ENCODE measurements at regions of chr15 and their contacts with region 1.

Region 1: GRCh38 chr15:100520132-100520921 is 8.4 kb downstream of the CERS3 start:
- DNase-seq: no peak
- ATAC-seq: peak in 2 of 8 donors; percentile 41 to 57
- H3K4me3 ChIP-seq: no peak overlapping the region
- H3K27ac ChIP-seq: peak overlapping the region in 1 of 10 donors; percentile 74
- H3K4me1 ChIP-seq: peaks cover 0 to 41% (median 6%) of the 10 kb centered on the region in 9 donors
- H3K27me3 ChIP-seq: peaks cover 0 to 4% (median 0%) of the 10 kb centered on the region in 7 donors
- CTCF ChIP-seq: no peak

Region 2: DNA sequence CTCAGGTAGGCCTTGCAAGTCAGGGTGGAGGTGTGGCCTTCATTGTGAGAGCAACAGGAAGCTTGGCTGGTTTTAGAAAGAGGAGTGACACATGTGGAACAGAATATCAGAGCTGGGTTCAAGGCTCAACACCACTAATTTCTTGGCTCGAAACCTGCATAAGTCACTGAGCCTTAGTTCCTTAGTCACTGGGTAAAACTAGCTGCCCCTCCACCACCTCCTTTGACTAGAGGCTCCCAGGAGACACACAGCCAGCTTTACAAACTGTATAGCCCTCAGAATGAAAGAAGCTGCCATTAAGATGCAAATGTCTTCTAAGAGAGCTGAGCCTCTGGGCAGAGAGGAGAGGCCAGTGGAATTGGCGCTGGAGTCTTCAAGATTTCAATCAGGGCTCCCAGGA is 59.3 kb before region 1 on chr15:
- intact Hi-C with region 1: loop called in 1 of 10 experiments (anchors 2 kb)
- DNase-seq: no peak
- ATAC-seq: no peak
- H3K4me3 ChIP-seq: no peak overlapping the region
- H3K27ac ChIP-seq: no peak overlapping the region
- H3K4me1 ChIP-seq: no peaks in the 10 kb centered on the region
- H3K27me3 ChIP-seq: no peaks in the 10 kb centered on the region
- CTCF ChIP-seq: no peak

Region 3: GRCh38 chr15:100484443-100484842 is 35.9 kb before region 1 on chr15:
- intact Hi-C with region 1: loop called in 1 of 10 experiments (anchors 1 kb)
- DNase-seq: no peak
- ATAC-seq: no peak
- H3K4me3 ChIP-seq: no peak overlapping the region
- H3K27ac ChIP-seq: no peak overlapping the region
- H3K4me1 ChIP-seq: no peaks in the 10 kb centered on the region
- H3K27me3 ChIP-seq: peaks cover 0 to 2% (median 0%) of the 10 kb centered on the region in 7 donors
- CTCF ChIP-seq: no peak

Measured in heart right ventricle (tissue), 16 donors.